HEK293 (cell line): ENCODE measurements at regions of chr18 and their contacts with region 1.

Region 1: GRCh38 chr18:3771121-3771971 is 321.4 kb downstream of the TGIF1 start:
- H3K4me3 ChIP-seq: peak overlapping the region; percentile 38
- H3K27ac ChIP-seq: peak overlapping the region; percentile 31; the same call in 1 of the 2 replicates
- H3K4me1 ChIP-seq: peaks cover 2% of the 10 kb centered on the region; the same call in 1 of the 2 replicates
- CTCF ChIP-seq: peak; percentile 92

Region 2: GRCh38 chr18:3710712-3711269 is 60.6 kb before region 1 on chr18:
- CTCF ChIA-PET with region 1: interaction called, 17 read pairs
- POLR2A ChIA-PET with region 1: no interaction called
- H3K4me3 ChIP-seq: no peak overlapping the region
- H3K27ac ChIP-seq: 0 out of 2 replicates have a peak overlapping the region, but pooled peaks have one; percentile 24
- H3K4me1 ChIP-seq: peaks cover 8% of the 10 kb centered on the region
- CTCF ChIP-seq: 0 out of 2 replicates have a peak, but pooled peaks have one; percentile 7

Region 3: GRCh38 chr18:3782901-3783300 is 11.6 kb after region 1 on chr18:
- CTCF ChIA-PET with region 1: interaction called, 25 read pairs
- POLR2A ChIA-PET with region 1: no interaction called
- H3K4me3 ChIP-seq: no peak overlapping the region
- H3K27ac ChIP-seq: no peak overlapping the region
- H3K4me1 ChIP-seq: no peaks in the 10 kb centered on the region
- CTCF ChIP-seq: no peak

Region 4: GRCh38 chr18:3827236-3827875 is 56.0 kb after region 1 on chr18:
- CTCF ChIA-PET with region 1: interaction called, 11 read pairs
- POLR2A ChIA-PET with region 1: no interaction called
- H3K4me3 ChIP-seq: no peak overlapping the region
- H3K27ac ChIP-seq: no peak overlapping the region
- H3K4me1 ChIP-seq: no peaks in the 10 kb centered on the region
- CTCF ChIP-seq: no peak

Region 5: GRCh38 chr18:3869848-3870247 is 98.5 kb after region 1 on chr18:
- CTCF ChIA-PET with region 1: interaction called, 107 read pairs
- POLR2A ChIA-PET with region 1: interaction called, 11 read pairs
- H3K4me3 ChIP-seq: no peak overlapping the region
- H3K27ac ChIP-seq: no peak overlapping the region
- H3K4me1 ChIP-seq: peaks cover 6% of the 10 kb centered on the region
- CTCF ChIP-seq: 0 out of 2 replicates have a peak, but pooled peaks have one; percentile 19

Region 6: GRCh38 chr18:3898861-3899613 is 127.7 kb after region 1 on chr18:
- CTCF ChIA-PET with region 1: no interaction called
- POLR2A ChIA-PET with region 1: no interaction called
- H3K4me3 ChIP-seq: no peak overlapping the region
- H3K27ac ChIP-seq: no peak overlapping the region
- H3K4me1 ChIP-seq: no peaks in the 10 kb centered on the region
- CTCF ChIP-seq: no peak

Region 7: DNA sequence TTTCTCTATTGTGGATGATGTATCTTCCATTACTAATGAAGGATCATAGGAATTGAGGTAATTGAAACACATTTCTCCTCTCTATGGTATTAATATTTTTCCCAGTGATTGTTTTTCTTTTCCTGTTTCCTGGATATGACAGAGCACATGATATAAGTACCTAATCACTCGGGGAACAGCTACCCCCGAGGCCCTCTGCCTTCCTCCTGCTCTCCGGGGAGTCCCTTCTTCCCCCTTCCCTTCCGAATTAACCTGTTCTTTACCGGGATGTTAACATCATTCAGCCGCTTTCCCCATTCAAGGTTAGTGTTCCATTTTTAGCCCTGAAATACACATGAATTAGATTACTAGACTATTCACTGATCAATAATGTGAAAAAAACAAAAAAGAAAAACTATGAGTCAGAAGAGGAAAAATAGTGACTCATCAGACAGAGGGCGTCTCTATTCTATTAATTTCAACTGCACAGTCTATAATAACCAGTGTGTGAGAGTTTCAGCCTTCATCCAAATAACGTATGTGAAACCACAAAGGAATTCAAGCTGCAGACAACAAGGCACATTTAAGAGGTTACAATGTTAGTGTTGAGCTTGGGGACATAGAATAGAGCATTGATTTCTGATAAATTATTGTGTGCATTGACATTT is 233.0 kb after region 1 on chr18:
- CTCF ChIA-PET with region 1: interaction called, 18 read pairs
- POLR2A ChIA-PET with region 1: no interaction called
- H3K4me3 ChIP-seq: no peak overlapping the region
- H3K27ac ChIP-seq: no peak overlapping the region
- H3K4me1 ChIP-seq: no peaks in the 10 kb centered on the region; the same call in 1 of the 2 replicates
- CTCF ChIP-seq: no peak